CD8-positive, alpha-beta memory T cell (primary cell): ENCODE measurements at regions of chr9 and their contacts with region 1.

Region 1: DNA sequence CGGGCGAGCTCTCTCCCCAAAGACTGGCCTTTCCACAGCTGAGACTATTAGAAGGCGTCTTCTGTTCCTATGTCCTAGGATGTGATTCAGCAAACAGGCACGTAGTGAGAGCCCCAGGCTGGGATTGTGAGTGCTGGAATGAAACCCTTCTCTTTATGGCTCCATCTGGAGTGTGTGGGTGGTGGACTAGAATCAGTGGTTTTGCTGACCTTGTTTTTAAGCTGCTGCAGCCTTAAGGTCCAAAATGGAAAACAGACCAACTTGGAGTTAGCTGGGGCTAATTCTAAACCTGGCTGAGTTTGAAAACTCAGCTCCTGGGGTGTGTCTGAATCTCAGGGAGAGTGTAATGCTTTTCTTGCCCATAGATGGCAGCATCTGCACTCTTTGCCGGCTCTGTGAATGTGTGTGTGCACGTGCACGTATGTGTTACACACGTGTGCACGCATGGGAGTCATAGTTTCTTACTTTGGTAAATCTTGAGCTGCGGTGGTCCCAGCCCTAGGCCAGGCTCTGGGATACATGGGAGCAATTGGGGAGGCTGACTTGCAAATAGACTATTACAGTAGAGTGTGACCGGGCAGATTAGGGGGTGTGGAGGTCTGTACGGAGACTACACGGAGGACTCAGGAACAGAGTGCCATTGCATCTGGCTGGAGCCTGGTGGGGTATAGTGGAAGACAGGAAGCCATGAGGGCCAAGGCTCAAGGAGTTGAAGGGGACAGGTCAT is 10.7 kb downstream of the GSN start:
- DNase-seq: peak in 1 of 5 donors; percentile 15
- H3K4me3 ChIP-seq: no peak overlapping the region
- H3K4me3 Mint-ChIP-seq: no peak overlapping the region
- H3K27ac ChIP-seq: no peak overlapping the region
- H3K27ac Mint-ChIP-seq: peak overlapping the region in 1 of 8 donors; percentile 15
- H3K4me1 ChIP-seq: no peaks in the 10 kb centered on the region
- H3K4me1 Mint-ChIP-seq: peaks cover 4 to 5% (median 4%) of the 10 kb centered on the region in 3 donors
- H3K27me3 ChIP-seq: no peaks in the 10 kb centered on the region
- H3K27me3 Mint-ChIP-seq: peaks cover 0 to 3% of the 10 kb centered on the region in 2 donors

Region 2: DNA sequence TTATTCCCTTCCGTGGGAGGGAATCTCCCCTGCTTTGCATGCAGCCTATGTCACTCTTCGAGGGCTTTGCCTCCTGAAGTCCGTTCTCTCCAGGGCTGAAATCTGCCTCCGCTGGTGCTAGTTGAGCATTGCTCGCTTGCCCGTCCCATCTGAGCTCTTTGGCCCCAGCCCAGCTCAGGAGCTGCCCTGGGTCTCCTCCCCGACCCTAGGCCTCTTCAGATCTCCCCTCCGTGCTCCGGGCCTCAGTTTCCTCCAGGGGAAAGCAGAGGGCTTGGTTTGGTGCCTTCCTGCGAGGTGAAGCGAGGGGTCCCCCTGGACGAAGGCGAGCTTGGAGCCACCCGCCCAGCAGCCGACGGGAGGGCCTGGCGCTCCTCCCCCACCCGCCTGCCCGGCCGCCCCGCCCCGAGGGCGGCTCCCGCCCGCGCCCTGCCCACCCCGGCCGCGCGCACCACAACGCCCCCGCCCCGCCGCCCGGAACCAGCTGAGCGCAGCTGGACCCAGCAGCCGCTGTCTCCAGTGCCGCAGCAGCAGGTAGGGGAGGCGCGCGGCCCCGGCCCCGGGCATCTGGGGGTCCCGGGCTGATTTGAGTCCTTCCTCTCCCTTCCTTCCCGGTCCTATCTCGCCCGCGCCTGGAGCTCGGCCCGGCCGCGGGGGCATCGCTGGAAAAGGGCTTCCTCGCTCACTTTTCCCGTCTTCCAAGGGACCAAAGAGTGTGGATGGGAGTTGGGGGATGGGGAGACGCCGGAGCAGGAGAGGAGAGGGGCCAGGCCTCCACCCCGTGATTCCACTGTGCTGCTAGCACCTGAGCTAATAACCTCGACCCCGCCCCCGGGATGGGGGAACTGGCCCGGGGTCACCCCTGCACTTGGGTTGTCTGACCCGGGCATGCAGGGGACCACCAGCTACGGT is 10.8 kb before region 1 on chr9 and contains the start of gene GSN:
- CTCF ChIA-PET with region 1: interaction called, 15 read pairs
- POLR2A ChIA-PET with region 1: no interaction called
- DNase-seq: peak; percentile 19 to 65 (median 21)
- H3K4me3 ChIP-seq: peak within 1 kb of the TSS; percentile 57
- H3K4me3 Mint-ChIP-seq: peak within 1 kb of the TSS; percentile 77 to 91 (median 80)
- H3K27ac ChIP-seq: peak within 1 kb of the TSS; percentile 49
- H3K27ac Mint-ChIP-seq: peak within 1 kb of the TSS in 4 of 8 donors; percentile 38 to 82 (median 72)
- H3K4me1 ChIP-seq: peaks cover 14% of the 10 kb centered on the region
- H3K4me1 Mint-ChIP-seq: peaks cover 9 to 19% (median 14%) of the 10 kb centered on the region in 3 donors
- H3K27me3 ChIP-seq: peaks cover 5% of the 10 kb centered on the region
- H3K27me3 Mint-ChIP-seq: peaks cover 0 to 12% of the 10 kb centered on the region in 2 donors
- total RNA-seq, gene GSN: 4.1 to 4.2 TPM

Region 3: DNA sequence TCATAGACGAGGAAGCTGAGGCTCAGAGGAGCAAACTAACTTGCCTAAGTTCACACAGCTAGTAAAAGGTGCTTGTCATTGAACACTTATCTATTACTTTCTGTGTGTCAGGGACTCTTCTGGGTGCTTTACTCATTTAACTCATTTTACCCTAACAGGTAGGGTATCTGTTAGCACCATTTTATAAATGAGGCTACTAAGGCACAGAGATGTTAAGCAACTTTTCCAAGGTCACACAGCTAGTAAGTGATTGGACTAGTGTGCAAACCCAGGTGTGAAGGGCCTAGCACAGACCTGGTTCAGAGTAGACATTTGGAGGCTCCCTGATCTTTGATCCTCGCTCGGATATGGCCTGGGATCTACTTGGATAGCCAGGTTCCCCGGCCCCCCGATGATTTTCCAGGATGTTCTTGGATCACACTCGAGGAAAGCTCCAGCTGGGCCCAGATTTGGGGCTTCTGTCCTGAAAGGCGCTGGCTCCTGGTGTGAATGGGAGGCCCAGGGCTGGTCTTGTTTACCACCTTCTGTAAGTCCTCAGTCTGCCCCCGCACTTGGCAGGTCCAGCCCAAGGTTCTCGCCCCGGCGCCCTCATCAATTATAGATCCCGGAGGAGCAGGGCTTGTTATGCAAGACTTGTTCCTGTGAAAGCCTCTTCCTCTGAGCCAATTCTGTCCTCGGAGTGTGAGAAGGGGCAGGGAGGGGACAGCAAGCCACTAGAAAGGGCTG is 26.7 kb after region 1 on chr9:
- CTCF ChIA-PET with region 1: no interaction called
- POLR2A ChIA-PET with region 1: no interaction called
- DNase-seq: no peak
- H3K4me3 ChIP-seq: no peak overlapping the region
- H3K4me3 Mint-ChIP-seq: no peak overlapping the region
- H3K27ac ChIP-seq: no peak overlapping the region
- H3K27ac Mint-ChIP-seq: no peak overlapping the region
- H3K4me1 ChIP-seq: no peaks in the 10 kb centered on the region
- H3K4me1 Mint-ChIP-seq: peaks cover 0 to 3% (median 1%) of the 10 kb centered on the region in 3 donors
- H3K27me3 ChIP-seq: no peaks in the 10 kb centered on the region
- H3K27me3 Mint-ChIP-seq: peaks cover 2 to 3% of the 10 kb centered on the region in 2 donors